GM12878 (cell line): ENCODE measurements at regions of chr1 and their contacts with region 1.

Region 1: DNA sequence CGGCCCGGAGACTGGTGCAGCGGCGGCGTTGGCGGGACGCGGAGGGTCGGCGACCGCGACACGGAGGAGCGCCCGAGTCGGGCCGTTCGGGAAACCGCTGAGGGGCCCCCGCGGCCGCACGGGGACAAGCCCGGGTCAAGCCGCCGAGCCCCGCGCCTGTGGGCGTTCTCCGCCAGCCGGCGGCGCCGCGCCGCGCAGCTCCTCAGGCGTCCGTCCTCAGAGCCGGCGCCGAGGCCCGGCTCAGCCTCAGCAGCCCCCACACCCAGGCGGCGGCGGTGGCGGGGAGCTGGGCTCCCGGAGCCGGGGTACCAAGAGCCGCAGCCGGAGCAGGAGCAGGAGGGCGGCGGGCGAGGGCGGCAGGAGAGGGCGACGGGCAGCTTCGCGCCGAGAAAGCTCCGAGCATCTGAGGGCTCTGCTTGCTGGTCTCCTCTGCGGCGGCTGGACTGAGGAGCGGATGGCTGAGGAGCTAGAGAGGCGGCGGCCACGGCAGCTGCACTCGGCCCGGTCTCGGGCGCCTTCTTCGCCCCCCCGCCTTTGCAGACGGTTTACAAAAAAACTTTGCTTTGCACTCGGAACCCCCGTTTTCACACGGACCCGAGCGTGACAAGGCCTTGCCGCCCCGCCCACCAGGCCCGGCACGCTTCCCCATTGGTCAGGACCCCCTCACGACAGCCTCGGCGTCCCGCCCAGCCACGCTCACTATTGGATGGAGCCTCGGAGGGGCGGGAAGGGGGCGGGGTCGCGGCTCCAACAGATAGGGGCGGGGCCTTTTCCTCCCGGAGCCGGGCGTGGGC is at the start of gene SLC30A1:
- DNase-seq: peak; percentile 83
- ATAC-seq: peak; percentile 87
- H3K4me3 ChIP-seq: peak within 1 kb of the TSS; percentile 96
- H3K27ac ChIP-seq: peak within 1 kb of the TSS; percentile 84
- H3K4me1 ChIP-seq: peaks cover 23% of the 10 kb centered on the region
- H3K27me3 ChIP-seq: no peaks in the 10 kb centered on the region
- CTCF ChIP-seq: no peak
- EP300 ChIP-seq: peak in 1 of 2 experiments; percentile 27; a peak in 1 of 4 replicates
- POLR2A ChIP-seq: peak; percentile 91
- RAD21 ChIP-seq: no peak
- polyA plus RNA-seq, gene SLC30A1: 3.5 to 4.0 TPM

Region 2: DNA sequence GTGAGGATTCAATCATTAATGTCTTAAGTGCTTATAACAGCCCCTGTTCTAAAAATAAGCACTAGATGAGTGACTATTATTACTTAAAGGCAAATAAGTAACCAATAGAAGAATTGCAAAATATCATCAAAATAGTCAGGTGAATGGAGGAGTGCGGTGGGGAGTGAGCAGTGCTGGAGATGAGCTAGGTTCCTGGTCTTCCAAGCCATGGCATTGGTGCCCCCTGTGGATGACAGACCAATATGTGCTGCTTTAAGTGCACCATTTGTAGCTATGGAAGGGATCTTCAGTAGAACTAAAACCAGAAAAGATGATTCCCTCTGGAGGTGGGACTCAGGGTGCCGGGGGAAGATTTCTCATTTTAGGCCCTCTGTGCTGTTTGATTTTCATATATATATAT is 46.2 kb after region 1 on chr1:
- CTCF ChIA-PET with region 1: interaction called, 6 read pairs
- POLR2A ChIA-PET with region 1: interaction called, 3 read pairs
- RAD21 ChIA-PET with region 1: interaction called, 11 read pairs
- SMC1A ChIA-PET with region 1: interaction called, 6 read pairs
- in situ Hi-C with region 1: no loop called
- intact Hi-C with region 1: no loop called
- DNase-seq: no peak
- ATAC-seq: peak; percentile 85
- H3K4me3 ChIP-seq: no peak overlapping the region
- H3K27ac ChIP-seq: no peak overlapping the region
- H3K4me1 ChIP-seq: no peaks in the 10 kb centered on the region
- H3K27me3 ChIP-seq: no peaks in the 10 kb centered on the region
- CTCF ChIP-seq: peak; percentile 30 to 60 (median 35); a peak in 4 of 6 replicates
- EP300 ChIP-seq: no peak
- POLR2A ChIP-seq: no peak
- RAD21 ChIP-seq: peak; percentile 42

Region 3: DNA sequence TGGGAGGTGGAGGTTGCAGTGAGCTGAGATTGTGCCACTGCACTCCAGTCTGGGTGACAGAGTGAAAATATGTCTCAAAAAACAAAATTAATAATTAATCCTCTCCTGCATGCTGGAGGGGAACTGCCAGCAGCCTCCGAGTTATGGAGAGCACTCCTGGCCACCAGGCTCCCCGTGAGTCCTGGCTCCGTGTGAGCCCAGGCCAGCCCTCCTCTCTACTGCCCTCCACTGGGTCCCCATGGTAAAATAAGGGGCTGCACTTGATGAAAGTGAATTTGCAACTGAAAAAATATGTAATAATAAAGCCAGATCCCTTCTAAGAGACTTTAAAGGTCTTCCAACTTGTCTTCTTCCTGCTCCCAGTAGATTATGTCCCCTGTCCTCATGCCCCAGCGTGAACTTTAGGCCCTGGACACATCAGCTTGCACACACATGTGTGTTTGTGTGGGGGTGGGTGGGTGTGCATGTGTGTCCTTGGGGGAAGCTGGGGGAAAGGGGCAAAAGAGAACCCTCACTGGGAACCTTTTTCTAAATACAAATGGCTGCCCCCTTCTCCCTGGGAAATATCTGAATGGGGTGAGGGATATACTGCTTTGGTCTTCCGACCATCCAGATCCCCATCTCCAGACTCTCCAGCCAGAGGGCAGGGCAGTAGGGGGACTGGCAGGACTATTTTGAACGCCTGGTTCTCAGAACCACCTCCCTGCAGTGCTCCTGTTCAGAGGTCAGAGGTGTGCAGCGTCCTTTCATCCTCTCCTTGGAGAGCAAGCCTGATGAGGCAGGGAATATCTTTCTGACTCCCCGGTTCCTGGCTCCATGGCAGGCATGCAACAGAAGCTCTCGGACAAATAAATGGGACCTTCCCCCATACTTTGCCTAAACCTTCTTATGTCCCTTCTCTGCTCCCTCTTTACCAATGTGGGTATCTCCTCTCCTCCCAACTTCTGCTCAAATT is 70.4 kb after region 1 on chr1:
- CTCF ChIA-PET with region 1: interaction called, 11 read pairs
- POLR2A ChIA-PET with region 1: no interaction called
- RAD21 ChIA-PET with region 1: interaction called, 7 read pairs
- SMC1A ChIA-PET with region 1: interaction called, 7 read pairs
- in situ Hi-C with region 1: no loop called
- intact Hi-C with region 1: no loop called
- DNase-seq: no peak
- ATAC-seq: peak; percentile 89
- H3K4me3 ChIP-seq: no peak overlapping the region
- H3K27ac ChIP-seq: no peak overlapping the region
- H3K4me1 ChIP-seq: no peaks in the 10 kb centered on the region
- H3K27me3 ChIP-seq: peaks cover 0 to 2% of the 10 kb centered on the region in 2 experiments; a peak in 1 of 4 replicates
- CTCF ChIP-seq: peak; percentile 57 to 65 (median 60)
- EP300 ChIP-seq: no peak
- POLR2A ChIP-seq: no peak
- RAD21 ChIP-seq: peak; percentile 58